H1 (cell line): ENCODE measurements at regions of chr1 and their contacts with region 1.

Region 1: GRCh38 chr1:168116327-168116806 is 20.4 kb downstream of the GPR161 start:
- DNase-seq: no peak
- H3K4me3 ChIP-seq: no peak overlapping the region
- H3K27ac ChIP-seq: no peak overlapping the region
- H3K4me1 ChIP-seq: peaks cover 0 to under 1% (median 0%) of the 10 kb centered on the region in 4 experiments; a peak in 1 of 7 replicates
- H3K27me3 ChIP-seq: no peaks in the 10 kb centered on the region
- CTCF ChIP-seq: no peak
- EP300 ChIP-seq: no peak
- POLR2A ChIP-seq: no peak
- RAD21 ChIP-seq: no peak

Region 2: GRCh38 chr1:168019407-168019806 is 97.0 kb before region 1 on chr1:
- CTCF ChIA-PET with region 1: no interaction called
- POLR2A ChIA-PET with region 1: no interaction called
- DNase-seq: no peak
- H3K4me3 ChIP-seq: no peak overlapping the region
- H3K27ac ChIP-seq: no peak overlapping the region
- H3K4me1 ChIP-seq: no peaks in the 10 kb centered on the region
- H3K27me3 ChIP-seq: no peaks in the 10 kb centered on the region
- CTCF ChIP-seq: no peak
- EP300 ChIP-seq: no peak
- POLR2A ChIP-seq: no peak
- RAD21 ChIP-seq: 0 out of 4 replicates have a peak, but pooled peaks of 1 of the 2 experiments have one; percentile 8

Region 3: GRCh38 chr1:168129933-168130332 is 13.6 kb after region 1 on chr1:
- CTCF ChIA-PET with region 1: interaction called, 14 read pairs
- POLR2A ChIA-PET with region 1: interaction called, 6 read pairs
- DNase-seq: no peak
- H3K4me3 ChIP-seq: no peak overlapping the region
- H3K27ac ChIP-seq: no peak overlapping the region
- H3K4me1 ChIP-seq: peaks cover 0 to 2% (median 0%) of the 10 kb centered on the region in 4 experiments; a peak in 2 of 7 replicates
- H3K27me3 ChIP-seq: peaks cover 0 to 4% (median 2%) of the 10 kb centered on the region in 4 experiments; a peak in 4 of 7 replicates
- CTCF ChIP-seq: peak in 2 of 3 experiments; percentile 24 to 31; a peak in 2 of 4 replicates
- EP300 ChIP-seq: no peak
- POLR2A ChIP-seq: no peak
- RAD21 ChIP-seq: no peak; a peak in 1 of 4 replicates

Region 4: GRCh38 chr1:168187177-168187576 is 70.8 kb after region 1 on chr1:
- CTCF ChIA-PET with region 1: no interaction called
- POLR2A ChIA-PET with region 1: no interaction called
- DNase-seq: no peak
- H3K4me3 ChIP-seq: no peak overlapping the region
- H3K27ac ChIP-seq: no peak overlapping the region
- H3K4me1 ChIP-seq: no peaks in the 10 kb centered on the region
- H3K27me3 ChIP-seq: no peaks in the 10 kb centered on the region
- CTCF ChIP-seq: no peak
- EP300 ChIP-seq: no peak
- POLR2A ChIP-seq: no peak
- RAD21 ChIP-seq: no peak

Region 5: GRCh38 chr1:168216171-168216570 is 99.8 kb after region 1 on chr1:
- CTCF ChIA-PET with region 1: no interaction called
- POLR2A ChIA-PET with region 1: no interaction called
- DNase-seq: no peak
- H3K4me3 ChIP-seq: no peak overlapping the region
- H3K27ac ChIP-seq: no peak overlapping the region
- H3K4me1 ChIP-seq: peaks cover 0 to 5% (median 4%) of the 10 kb centered on the region in 4 experiments; a peak in 3 of 7 replicates
- H3K27me3 ChIP-seq: no peaks in the 10 kb centered on the region
- CTCF ChIP-seq: no peak
- EP300 ChIP-seq: no peak
- POLR2A ChIP-seq: no peak
- RAD21 ChIP-seq: no peak